CD4-positive, alpha-beta memory T cell (primary cell): ENCODE measurements at regions of chr4 and their contacts with region 1.

Region 1: GRCh38 chr4:152696764-152697261 is 17.0 kb upstream of the TMEM154 start:
- DNase-seq: peak; percentile 58 to 81 (median 70)
- H3K4me3 ChIP-seq: no peak overlapping the region
- H3K4me3 Mint-ChIP-seq: peak overlapping the region in 6 of 8 donors; percentile 0 to 51 (median 10)
- H3K27ac ChIP-seq: no peak overlapping the region
- H3K27ac Mint-ChIP-seq: peak overlapping the region in 5 of 7 donors; percentile 2 to 83 (median 67)
- H3K4me1 ChIP-seq: peaks cover 14% of the 10 kb centered on the region
- H3K4me1 Mint-ChIP-seq: peaks cover 10 to 21% (median 14%) of the 10 kb centered on the region in 4 donors
- H3K27me3 ChIP-seq: no peaks in the 10 kb centered on the region
- H3K27me3 Mint-ChIP-seq: no peaks in the 10 kb centered on the region

Region 2: DNA sequence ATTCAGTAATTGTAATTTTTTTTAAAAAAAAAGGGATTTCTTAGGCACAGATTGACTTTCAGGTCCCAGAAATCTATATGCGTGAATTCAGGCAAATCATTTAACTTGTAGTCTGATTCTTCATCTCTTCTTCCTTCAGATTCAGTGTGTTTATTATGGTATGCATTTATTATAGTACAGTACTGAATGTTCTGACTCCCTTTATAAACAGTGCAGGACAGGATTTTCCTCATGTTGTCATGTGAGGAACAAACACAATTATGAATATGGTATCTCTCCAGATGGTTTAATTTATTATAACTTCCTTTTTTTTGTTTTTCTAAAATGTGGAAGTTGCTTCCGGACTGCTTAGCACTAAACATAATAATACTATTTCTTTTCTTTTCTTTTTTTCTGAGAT is 1543.2 kb before region 1 on chr4:
- CTCF ChIA-PET with region 1: no interaction called
- POLR2A ChIA-PET with region 1: no interaction called
- intact Hi-C with region 1: no loop called
- DNase-seq: no peak
- H3K4me3 ChIP-seq: no peak overlapping the region
- H3K4me3 Mint-ChIP-seq: no peak overlapping the region
- H3K27ac ChIP-seq: no peak overlapping the region
- H3K27ac Mint-ChIP-seq: no peak overlapping the region
- H3K4me1 ChIP-seq: no peaks in the 10 kb centered on the region
- H3K4me1 Mint-ChIP-seq: peaks cover 0 to 5% (median 2%) of the 10 kb centered on the region in 4 donors
- H3K27me3 ChIP-seq: no peaks in the 10 kb centered on the region
- H3K27me3 Mint-ChIP-seq: peaks cover 9 to 23% of the 10 kb centered on the region in 2 donors

Region 3: GRCh38 chr4:152679414-152680281 is 17.2 kb before region 1 on chr4 and contains the start of gene TMEM154:
- CTCF ChIA-PET with region 1: no interaction called
- POLR2A ChIA-PET with region 1: interaction called, 5 read pairs
- intact Hi-C with region 1: loop called (anchors 1 kb)
- DNase-seq: peak; percentile 78 to 82 (median 81)
- H3K4me3 ChIP-seq: peak within 1 kb of the TSS; percentile 30 to 62
- H3K4me3 Mint-ChIP-seq: peak within 1 kb of the TSS; percentile 91 to 97 (median 96)
- H3K27ac ChIP-seq: peak within 1 kb of the TSS; percentile 69
- H3K27ac Mint-ChIP-seq: peak within 1 kb of the TSS; percentile 90 to 98 (median 96)
- H3K4me1 ChIP-seq: peaks cover 47% of the 10 kb centered on the region
- H3K4me1 Mint-ChIP-seq: peaks cover 36 to 55% (median 47%) of the 10 kb centered on the region in 4 donors
- H3K27me3 ChIP-seq: no peaks in the 10 kb centered on the region
- H3K27me3 Mint-ChIP-seq: no peaks in the 10 kb centered on the region
- total RNA-seq, gene TMEM154: 35.2 to 38.6 TPM